GM12878 (cell line): ENCODE measurements at regions of chr1 and their contacts with region 1.

Region 1: GRCh38 chr1:186165303-186165702 is 209.8 kb downstream of the TPR start:
- DNase-seq: no peak
- ATAC-seq: no peak
- H3K4me3 ChIP-seq: no peak overlapping the region
- H3K27ac ChIP-seq: no peak overlapping the region
- H3K4me1 ChIP-seq: no peaks in the 10 kb centered on the region
- H3K27me3 ChIP-seq: no peaks in the 10 kb centered on the region
- CTCF ChIP-seq: no peak
- EP300 ChIP-seq: no peak
- POLR2A ChIP-seq: no peak
- RAD21 ChIP-seq: no peak

Region 2: GRCh38 chr1:186102557-186103148 is 62.6 kb before region 1 on chr1:
- CTCF ChIA-PET with region 1: no interaction called
- POLR2A ChIA-PET with region 1: no interaction called
- RAD21 ChIA-PET with region 1: no interaction called
- SMC1A ChIA-PET with region 1: no interaction called
- in situ Hi-C with region 1: no loop called
- intact Hi-C with region 1: loop called (anchors 10 kb)
- DNase-seq: no peak
- ATAC-seq: no peak
- H3K4me3 ChIP-seq: no peak overlapping the region
- H3K27ac ChIP-seq: no peak overlapping the region
- H3K4me1 ChIP-seq: no peaks in the 10 kb centered on the region
- H3K27me3 ChIP-seq: no peaks in the 10 kb centered on the region
- CTCF ChIP-seq: no peak
- EP300 ChIP-seq: no peak
- POLR2A ChIP-seq: no peak
- RAD21 ChIP-seq: no peak